B cell (primary cell): ENCODE measurements at regions of chr19 and their contacts with region 1.

Region 1: GRCh38 chr19:45692187-45693105 is at the start of gene QPCTL:
- DNase-seq: peak; percentile 99
- ATAC-seq: peak; percentile 85
- H3K4me3 ChIP-seq: peak within 1 kb of the TSS; percentile 81 to 96 (median 88)
- H3K4me3 Mint-ChIP-seq: peak within 1 kb of the TSS; percentile 93
- H3K27ac ChIP-seq: peak within 1 kb of the TSS; percentile 89 to 94
- H3K27ac Mint-ChIP-seq: peak within 1 kb of the TSS; percentile 92
- H3K4me1 ChIP-seq: peaks cover 15 to 22% of the 10 kb centered on the region in 2 donors
- H3K4me1 Mint-ChIP-seq: peaks cover 28% of the 10 kb centered on the region
- H3K27me3 ChIP-seq: no peaks in the 10 kb centered on the region
- H3K27me3 Mint-ChIP-seq: no peaks in the 10 kb centered on the region
- CTCF ChIP-seq: no peak
- total RNA-seq, gene QPCTL: 50.9 and 61.3 TPM in 2 replicates

Region 2: GRCh38 chr19:44032001-44032610 is 1660.3 kb before region 1 on chr19:
- CTCF ChIA-PET with region 1: no interaction called
- POLR2A ChIA-PET with region 1: no interaction called
- intact Hi-C with region 1: no loop called
- DNase-seq: no peak
- ATAC-seq: no peak
- H3K4me3 ChIP-seq: peak overlapping the region in 1 of 5 experiments; percentile 18
- H3K4me3 Mint-ChIP-seq: no peak overlapping the region
- H3K27ac ChIP-seq: no peak overlapping the region
- H3K27ac Mint-ChIP-seq: no peak overlapping the region
- H3K4me1 ChIP-seq: no peaks in the 10 kb centered on the region
- H3K4me1 Mint-ChIP-seq: peaks cover 1% of the 10 kb centered on the region
- H3K27me3 ChIP-seq: no peaks in the 10 kb centered on the region
- H3K27me3 Mint-ChIP-seq: no peaks in the 10 kb centered on the region
- CTCF ChIP-seq: no peak

Region 3: DNA sequence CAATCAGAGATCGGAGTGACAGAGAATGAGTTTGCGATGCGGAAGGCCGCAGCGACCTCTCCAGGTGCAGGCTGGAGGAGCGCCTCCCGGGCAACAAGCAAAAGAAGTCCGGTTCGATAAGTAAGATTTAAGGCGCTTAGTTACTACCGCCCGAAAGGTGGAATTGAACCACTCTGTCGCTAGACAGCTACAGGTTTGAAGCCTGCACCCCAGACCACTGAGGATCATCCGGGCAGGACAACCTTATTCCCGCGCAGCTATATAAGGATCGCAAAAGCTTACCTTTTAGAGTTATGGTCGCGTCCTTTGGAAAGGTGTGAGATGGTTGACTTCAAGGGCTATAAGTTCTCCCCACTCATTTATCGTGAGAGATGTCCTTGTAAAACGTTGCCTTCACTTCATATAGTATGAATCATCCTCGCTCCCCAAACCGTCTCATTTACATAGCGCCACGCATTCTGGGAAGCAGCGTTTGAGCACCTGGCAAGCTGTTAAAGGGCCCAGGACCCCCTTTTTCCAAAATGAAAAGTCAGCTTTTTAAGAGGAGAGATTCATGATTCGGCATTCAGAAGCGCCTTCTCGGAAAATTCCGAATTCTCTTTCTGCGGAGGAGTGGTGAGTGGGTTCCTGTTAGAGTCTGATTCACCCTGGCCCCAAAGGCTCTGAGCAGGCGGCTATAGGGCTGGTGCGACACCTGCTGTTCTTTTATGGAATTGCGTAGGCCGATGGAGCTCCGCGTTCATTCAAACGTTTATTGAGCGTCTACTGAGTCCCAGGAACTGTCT is 213.8 kb before region 1 on chr19:
- CTCF ChIA-PET with region 1: interaction called, 3 read pairs
- POLR2A ChIA-PET with region 1: no interaction called
- intact Hi-C with region 1: loop called (anchors 2 kb)
- DNase-seq: peak; percentile 95
- ATAC-seq: peak; percentile 83
- H3K4me3 ChIP-seq: peak overlapping the region; percentile 67 to 98 (median 79)
- H3K4me3 Mint-ChIP-seq: peak overlapping the region; percentile 74
- H3K27ac ChIP-seq: peak overlapping the region; percentile 99 to 100
- H3K27ac Mint-ChIP-seq: peak overlapping the region; percentile 98
- H3K4me1 ChIP-seq: peaks cover 7 to 16% of the 10 kb centered on the region in 2 donors
- H3K4me1 Mint-ChIP-seq: peaks cover 26% of the 10 kb centered on the region
- H3K27me3 ChIP-seq: peaks cover 0 to 6% (median 3%) of the 10 kb centered on the region in 4 experiments
- H3K27me3 Mint-ChIP-seq: peaks cover 10% of the 10 kb centered on the region
- CTCF ChIP-seq: peak; percentile 82

Region 4: DNA sequence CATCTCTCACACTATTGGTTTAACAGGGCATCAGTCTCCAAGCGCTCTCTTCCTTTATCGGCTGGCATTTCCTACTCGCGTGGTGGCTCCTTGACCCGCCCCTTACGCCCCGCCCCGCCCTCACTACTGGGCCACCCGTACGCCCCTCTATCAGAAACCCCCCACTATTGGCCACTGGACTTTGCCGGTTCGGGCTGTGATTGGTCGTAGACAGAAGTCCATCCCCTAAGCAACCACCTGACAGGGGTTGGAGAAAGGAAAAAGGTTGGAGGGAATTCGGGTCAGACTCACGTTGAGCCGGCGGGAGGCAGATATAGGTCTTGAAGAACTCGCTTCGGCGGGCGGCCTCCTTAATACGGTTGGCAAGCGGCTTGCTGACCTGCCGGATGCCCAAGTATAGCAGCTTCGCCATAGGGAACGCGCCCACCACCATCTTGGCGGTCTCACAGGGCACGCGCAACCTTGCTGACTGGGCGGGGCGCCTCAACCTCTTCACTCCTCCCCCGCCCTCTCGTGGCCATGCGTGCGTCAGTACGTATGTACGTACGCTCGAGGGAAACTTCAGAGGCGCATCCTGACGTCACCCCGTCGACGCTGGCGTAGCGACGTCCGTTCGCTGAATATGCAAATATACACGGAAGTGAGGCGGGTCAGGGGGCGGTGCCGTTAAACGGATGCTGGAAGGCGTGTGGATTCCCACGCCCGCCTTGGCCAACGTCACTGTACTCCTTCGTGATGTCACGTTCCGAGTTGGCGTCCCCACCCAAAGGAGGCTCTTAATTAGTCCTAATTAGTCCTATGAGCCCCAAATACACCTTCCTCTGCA is 107.9 kb before region 1 on chr19 and contains the start of gene OPA3:
- CTCF ChIA-PET with region 1: no interaction called
- POLR2A ChIA-PET with region 1: interaction called, 5 read pairs
- intact Hi-C with region 1: loop called (anchors 1 kb)
- DNase-seq: peak; percentile 100
- ATAC-seq: peak; percentile 87
- H3K4me3 ChIP-seq: peak within 1 kb of the TSS; percentile 62 to 98 (median 82)
- H3K4me3 Mint-ChIP-seq: peak within 1 kb of the TSS; percentile 85
- H3K27ac ChIP-seq: peak within 1 kb of the TSS; percentile 97 to 98
- H3K27ac Mint-ChIP-seq: peak within 1 kb of the TSS; percentile 99
- H3K4me1 ChIP-seq: peaks cover 10 to 15% of the 10 kb centered on the region in 2 donors
- H3K4me1 Mint-ChIP-seq: peaks cover 21% of the 10 kb centered on the region
- H3K27me3 ChIP-seq: no peaks in the 10 kb centered on the region
- H3K27me3 Mint-ChIP-seq: peaks cover 5% of the 10 kb centered on the region
- CTCF ChIP-seq: no peak
- total RNA-seq, gene OPA3: 11.2 and 11.4 TPM in 2 replicates

Region 5: GRCh38 chr19:45717166-45717982 is 24.9 kb after region 1 on chr19:
- CTCF ChIA-PET with region 1: interaction called, 57 read pairs
- POLR2A ChIA-PET with region 1: interaction called, 41 read pairs
- intact Hi-C with region 1: loop called (anchors 1 kb)
- DNase-seq: peak; percentile 97
- ATAC-seq: peak; percentile 95
- H3K4me3 ChIP-seq: peak overlapping the region; percentile 76 to 93 (median 82)
- H3K4me3 Mint-ChIP-seq: peak overlapping the region; percentile 91
- H3K27ac ChIP-seq: peak overlapping the region; percentile 76 to 94
- H3K27ac Mint-ChIP-seq: peak overlapping the region; percentile 97
- H3K4me1 ChIP-seq: peaks cover 18 to 25% of the 10 kb centered on the region in 2 donors
- H3K4me1 Mint-ChIP-seq: peaks cover 39% of the 10 kb centered on the region
- H3K27me3 ChIP-seq: no peaks in the 10 kb centered on the region
- H3K27me3 Mint-ChIP-seq: no peaks in the 10 kb centered on the region
- CTCF ChIP-seq: no peak

Region 6: GRCh38 chr19:45792470-45793177 is 100.2 kb after region 1 on chr19 and contains the start of gene DMWD:
- CTCF ChIA-PET with region 1: interaction called, 8 read pairs
- POLR2A ChIA-PET with region 1: interaction called, 4 read pairs
- intact Hi-C with region 1: loop called (anchors 1 kb)
- DNase-seq: peak; percentile 99
- ATAC-seq: peak; percentile 97
- H3K4me3 ChIP-seq: peak within 1 kb of the TSS; percentile 40 to 73 (median 59)
- H3K4me3 Mint-ChIP-seq: peak within 1 kb of the TSS; percentile 93
- H3K27ac ChIP-seq: peak within 1 kb of the TSS; percentile 22 to 76
- H3K27ac Mint-ChIP-seq: peak within 1 kb of the TSS; percentile 92
- H3K4me1 ChIP-seq: peaks cover 24 to 29% of the 10 kb centered on the region in 2 donors
- H3K4me1 Mint-ChIP-seq: peaks cover 30% of the 10 kb centered on the region
- H3K27me3 ChIP-seq: no peaks in the 10 kb centered on the region
- H3K27me3 Mint-ChIP-seq: peaks cover 8% of the 10 kb centered on the region
- CTCF ChIP-seq: no peak
- total RNA-seq, gene DMWD: 86.4 and 91.2 TPM in 2 replicates